ENCODE measurements at regions of chr5 and their contacts with region 1.

Region 1: DNA sequence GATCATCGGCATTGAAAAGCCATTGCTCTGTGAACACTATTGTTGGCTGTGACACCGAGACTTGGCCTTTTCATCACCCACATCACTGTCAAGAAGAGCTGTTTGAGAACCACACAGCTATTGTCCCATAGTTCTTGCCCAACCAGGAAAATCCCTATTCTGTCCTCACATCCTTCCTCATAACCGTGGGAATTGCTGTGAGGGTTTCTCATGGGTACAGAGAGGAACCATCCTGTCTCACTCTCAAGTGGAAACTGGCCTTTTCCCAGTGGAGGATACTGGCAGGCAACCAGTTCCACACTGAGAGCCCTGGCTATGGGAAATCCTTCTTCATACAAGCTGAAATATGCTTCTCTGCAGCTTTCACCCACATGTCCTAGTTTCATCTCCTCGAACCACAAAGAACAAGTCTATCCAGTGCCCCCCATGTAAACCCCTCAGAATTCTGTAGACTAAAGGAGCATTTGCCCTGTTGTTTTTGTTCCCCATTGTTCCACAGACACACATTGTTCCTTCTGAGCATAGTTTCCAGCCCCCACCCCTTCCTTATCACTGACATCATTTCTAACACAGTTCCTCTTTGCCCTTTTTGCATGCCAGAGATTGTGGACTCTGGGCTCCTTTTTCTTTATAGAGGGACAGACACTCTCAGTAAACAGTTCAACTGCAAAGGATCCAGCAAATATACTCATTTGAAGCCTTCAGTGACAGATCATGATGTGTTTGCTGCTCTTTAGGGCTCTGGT is 57.8 kb upstream of the C5orf46 start:
- DNase-seq: peak; percentile 47
- ATAC-seq: peak; percentile 67 to 81

Region 2: GRCh38 chr5:147391781-147392180 is 572.3 kb before region 1 on chr5:
- intact Hi-C with region 1: no loop called
- DNase-seq: peak; percentile 56
- ATAC-seq: peak; percentile 77 to 85

Region 3: GRCh38 chr5:148113243-148113642 is 149.1 kb after region 1 on chr5:
- intact Hi-C with region 1: loop called in 1 of 2 experiments (anchors 10 kb)
- DNase-seq: no peak
- ATAC-seq: no peak

Measured in left cardiac atrium (tissue), 4 donors.